H1 (cell line): ENCODE measurements at regions of chr1 and their contacts with region 1.

Region 1: DNA sequence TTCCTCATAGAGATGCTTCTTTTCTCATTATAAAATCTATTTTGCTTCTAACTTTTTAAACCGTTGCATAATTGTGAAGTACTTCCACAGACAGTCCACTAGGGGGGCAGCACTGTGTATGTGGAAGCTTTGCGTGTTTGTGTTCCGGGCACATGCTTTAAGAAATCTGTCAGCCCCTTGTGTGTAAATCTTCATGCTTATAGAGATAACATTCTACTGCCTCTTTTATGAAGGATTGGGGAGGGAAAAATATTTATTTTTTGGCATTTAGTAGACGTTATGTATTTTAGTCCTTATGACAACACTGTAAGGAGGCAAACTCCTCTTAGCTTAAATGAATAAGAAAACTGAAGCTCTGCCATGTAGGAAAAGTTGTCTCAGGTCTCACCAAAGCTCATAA is 157.3 kb upstream of the PTGFR start:
- DNase-seq: no peak
- H3K4me3 ChIP-seq: no peak overlapping the region
- H3K27ac ChIP-seq: no peak overlapping the region
- H3K4me1 ChIP-seq: no peaks in the 10 kb centered on the region
- H3K27me3 ChIP-seq: no peaks in the 10 kb centered on the region
- CTCF ChIP-seq: peak; percentile 38 to 65 (median 57)
- EP300 ChIP-seq: no peak
- POLR2A ChIP-seq: no peak
- RAD21 ChIP-seq: peak; percentile 50 to 54

Region 2: GRCh38 chr1:78153092-78153736 is 180.3 kb before region 1 on chr1:
- CTCF ChIA-PET with region 1: no interaction called
- POLR2A ChIA-PET with region 1: no interaction called
- DNase-seq: no peak
- H3K4me3 ChIP-seq: no peak overlapping the region
- H3K27ac ChIP-seq: no peak overlapping the region
- H3K4me1 ChIP-seq: peaks cover 0 to 5% (median 4%) of the 10 kb centered on the region in 4 experiments; a peak in 3 of 7 replicates
- H3K27me3 ChIP-seq: no peaks in the 10 kb centered on the region
- CTCF ChIP-seq: no peak
- EP300 ChIP-seq: no peak
- POLR2A ChIP-seq: no peak
- RAD21 ChIP-seq: no peak

Region 3: DNA sequence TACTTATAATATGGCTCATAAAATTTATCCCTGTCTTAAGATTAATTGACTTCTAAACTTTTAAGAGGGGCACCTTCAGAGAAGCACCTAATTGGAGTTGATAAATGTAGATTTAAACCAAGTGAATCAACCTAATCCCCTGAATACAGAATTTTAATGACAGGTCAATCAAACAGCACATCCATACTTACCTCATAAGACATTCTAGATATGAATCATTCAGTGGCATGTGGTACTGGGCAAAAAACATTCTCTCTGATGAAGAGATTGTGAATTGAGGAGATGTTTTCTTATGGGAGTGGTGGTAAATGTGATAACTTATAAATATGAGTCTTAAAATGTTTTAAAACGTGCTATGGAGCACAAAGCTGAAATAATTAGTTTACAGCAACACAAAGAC is 10.2 kb before region 1 on chr1:
- CTCF ChIA-PET with region 1: interaction called, 33 read pairs
- POLR2A ChIA-PET with region 1: interaction called, 3 read pairs
- DNase-seq: no peak
- H3K4me3 ChIP-seq: no peak overlapping the region
- H3K27ac ChIP-seq: no peak overlapping the region
- H3K4me1 ChIP-seq: no peaks in the 10 kb centered on the region
- H3K27me3 ChIP-seq: peaks cover 0 to 1% (median 0%) of the 10 kb centered on the region in 4 experiments; a peak in 1 of 7 replicates
- CTCF ChIP-seq: no peak
- EP300 ChIP-seq: no peak
- POLR2A ChIP-seq: no peak
- RAD21 ChIP-seq: no peak

Region 4: DNA sequence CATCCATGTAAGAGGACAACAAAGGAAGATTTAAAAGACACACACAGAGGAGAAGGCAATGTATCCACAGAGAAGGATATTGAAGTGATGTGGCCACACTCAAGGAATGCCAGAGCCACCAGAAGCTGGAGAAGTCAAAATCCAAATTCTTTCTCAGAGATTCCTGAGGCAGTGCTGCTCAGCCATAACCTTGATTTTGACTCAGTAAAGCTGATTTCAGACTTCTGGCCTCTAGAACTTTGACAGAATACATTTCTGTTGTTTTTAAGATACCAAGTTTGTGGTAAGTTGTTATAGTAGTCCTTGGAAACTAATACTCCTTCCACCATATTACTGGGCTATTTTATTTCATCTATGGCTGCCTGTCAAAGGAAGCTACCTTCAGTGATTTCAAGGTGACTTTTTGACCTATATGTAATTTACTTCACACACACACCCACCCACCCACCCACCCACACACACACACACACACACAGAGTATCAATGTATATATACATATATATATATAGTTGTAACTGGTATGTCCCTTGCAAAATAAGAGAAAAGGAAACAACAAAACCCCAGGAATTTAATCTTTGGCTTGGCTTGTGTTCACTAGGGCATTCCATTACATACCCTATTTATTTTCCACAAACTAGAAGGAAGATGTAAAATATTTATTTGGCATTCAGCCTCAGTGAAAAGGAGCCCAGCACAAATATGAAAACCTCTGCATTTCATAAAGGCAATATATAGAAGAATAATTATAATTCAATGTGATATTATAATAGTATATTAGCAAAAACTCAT is 15.2 kb after region 1 on chr1:
- CTCF ChIA-PET with region 1: interaction called, 18 read pairs
- POLR2A ChIA-PET with region 1: no interaction called
- DNase-seq: no peak
- H3K4me3 ChIP-seq: no peak overlapping the region
- H3K27ac ChIP-seq: no peak overlapping the region
- H3K4me1 ChIP-seq: no peaks in the 10 kb centered on the region
- H3K27me3 ChIP-seq: no peaks in the 10 kb centered on the region
- CTCF ChIP-seq: no peak
- EP300 ChIP-seq: no peak
- POLR2A ChIP-seq: no peak
- RAD21 ChIP-seq: no peak

Region 5: GRCh38 chr1:78355656-78356055 is 22.2 kb after region 1 on chr1:
- CTCF ChIA-PET with region 1: interaction called, 14 read pairs
- POLR2A ChIA-PET with region 1: no interaction called
- DNase-seq: no peak
- H3K4me3 ChIP-seq: no peak overlapping the region
- H3K27ac ChIP-seq: no peak overlapping the region
- H3K4me1 ChIP-seq: no peaks in the 10 kb centered on the region
- H3K27me3 ChIP-seq: no peaks in the 10 kb centered on the region
- CTCF ChIP-seq: no peak
- EP300 ChIP-seq: no peak
- POLR2A ChIP-seq: no peak
- RAD21 ChIP-seq: no peak

Region 6: GRCh38 chr1:78437396-78437795 is 103.9 kb after region 1 on chr1:
- CTCF ChIA-PET with region 1: no interaction called
- POLR2A ChIA-PET with region 1: no interaction called
- DNase-seq: no peak
- H3K4me3 ChIP-seq: no peak overlapping the region
- H3K27ac ChIP-seq: no peak overlapping the region
- H3K4me1 ChIP-seq: no peaks in the 10 kb centered on the region
- H3K27me3 ChIP-seq: no peaks in the 10 kb centered on the region
- CTCF ChIP-seq: no peak
- EP300 ChIP-seq: no peak
- POLR2A ChIP-seq: no peak
- RAD21 ChIP-seq: no peak